ENCODE measurements at regions of chr14 and their contacts with region 1.

Region 1: GRCh38 chr14:96424109-96424989 is 32.4 kb downstream of the AK7 start:
- DNase-seq: peak in 1 of 2 experiments; percentile 70
- H3K4me3 ChIP-seq: peak overlapping the region; percentile 38
- H3K4me3 Mint-ChIP-seq: peak overlapping the region; percentile 69
- H3K27ac Mint-ChIP-seq: no peak overlapping the region
- H3K4me1 ChIP-seq: no peaks in the 10 kb centered on the region
- H3K4me1 Mint-ChIP-seq: no peaks in the 10 kb centered on the region
- H3K27me3 ChIP-seq: no peaks in the 10 kb centered on the region
- H3K27me3 Mint-ChIP-seq: no peaks in the 10 kb centered on the region
- CTCF ChIP-seq: peak; percentile 54 to 62

Region 2: GRCh38 chr14:96275177-96276112 is 148.9 kb before region 1 on chr14:
- CTCF ChIA-PET with region 1: no interaction called
- POLR2A ChIA-PET with region 1: no interaction called
- intact Hi-C with region 1: loop called (anchors 1 kb)
- DNase-seq: peak; percentile 64 to 83
- H3K4me3 ChIP-seq: no peak overlapping the region
- H3K4me3 Mint-ChIP-seq: peak overlapping the region; percentile 11
- H3K27ac Mint-ChIP-seq: no peak overlapping the region
- H3K4me1 ChIP-seq: peaks cover 12% of the 10 kb centered on the region
- H3K4me1 Mint-ChIP-seq: peaks cover 12% of the 10 kb centered on the region
- H3K27me3 ChIP-seq: no peaks in the 10 kb centered on the region
- H3K27me3 Mint-ChIP-seq: no peaks in the 10 kb centered on the region
- CTCF ChIP-seq: peak; percentile 91 to 96

Region 3: GRCh38 chr14:96281486-96281885 is 142.9 kb before region 1 on chr14:
- CTCF ChIA-PET with region 1: no interaction called
- POLR2A ChIA-PET with region 1: no interaction called
- intact Hi-C with region 1: loop called (anchors 1 kb)
- DNase-seq: no peak
- H3K4me3 ChIP-seq: no peak overlapping the region
- H3K4me3 Mint-ChIP-seq: no peak overlapping the region
- H3K27ac Mint-ChIP-seq: no peak overlapping the region
- H3K4me1 ChIP-seq: peaks cover 12% of the 10 kb centered on the region
- H3K4me1 Mint-ChIP-seq: peaks cover 12% of the 10 kb centered on the region
- H3K27me3 ChIP-seq: no peaks in the 10 kb centered on the region
- H3K27me3 Mint-ChIP-seq: no peaks in the 10 kb centered on the region
- CTCF ChIP-seq: no peak

Region 4: GRCh38 chr14:96297000-96297399 is 127.3 kb before region 1 on chr14:
- CTCF ChIA-PET with region 1: no interaction called
- POLR2A ChIA-PET with region 1: no interaction called
- intact Hi-C with region 1: loop called (anchors 1 kb)
- DNase-seq: no peak
- H3K4me3 ChIP-seq: no peak overlapping the region
- H3K4me3 Mint-ChIP-seq: no peak overlapping the region
- H3K27ac Mint-ChIP-seq: no peak overlapping the region
- H3K4me1 ChIP-seq: no peaks in the 10 kb centered on the region
- H3K4me1 Mint-ChIP-seq: peaks cover 6% of the 10 kb centered on the region
- H3K27me3 ChIP-seq: no peaks in the 10 kb centered on the region
- H3K27me3 Mint-ChIP-seq: no peaks in the 10 kb centered on the region
- CTCF ChIP-seq: peak; percentile 15 to 44

Region 5: DNA sequence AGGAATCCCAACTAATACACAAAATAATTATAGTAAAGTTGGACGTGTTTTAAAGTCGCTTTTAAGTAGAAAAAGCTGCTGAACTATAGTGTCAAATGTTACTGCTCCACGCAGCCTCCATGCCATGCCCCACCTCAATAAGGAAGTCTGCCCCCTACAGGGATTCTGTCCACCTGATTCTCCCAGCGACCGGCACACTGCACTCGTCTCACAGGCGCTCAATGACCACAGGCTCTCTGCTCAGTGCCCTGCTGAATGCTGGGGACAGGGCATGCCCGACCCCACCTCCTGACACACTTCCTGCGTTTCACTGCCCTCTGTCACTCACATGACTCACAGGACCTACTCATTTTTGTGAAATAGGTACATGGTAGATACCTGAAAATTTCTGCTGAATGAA is 119.4 kb before region 1 on chr14:
- CTCF ChIA-PET with region 1: no interaction called
- POLR2A ChIA-PET with region 1: no interaction called
- intact Hi-C with region 1: loop called (anchors 1 kb)
- DNase-seq: no peak
- H3K4me3 ChIP-seq: no peak overlapping the region
- H3K4me3 Mint-ChIP-seq: no peak overlapping the region
- H3K27ac Mint-ChIP-seq: no peak overlapping the region
- H3K4me1 ChIP-seq: peaks cover 20% of the 10 kb centered on the region
- H3K4me1 Mint-ChIP-seq: peaks cover 14% of the 10 kb centered on the region
- H3K27me3 ChIP-seq: no peaks in the 10 kb centered on the region
- H3K27me3 Mint-ChIP-seq: no peaks in the 10 kb centered on the region
- CTCF ChIP-seq: no peak

Region 6: GRCh38 chr14:96409701-96410100 is 14.6 kb before region 1 on chr14:
- CTCF ChIA-PET with region 1: no interaction called
- POLR2A ChIA-PET with region 1: no interaction called
- intact Hi-C with region 1: no loop called
- DNase-seq: no peak
- H3K4me3 ChIP-seq: no peak overlapping the region
- H3K4me3 Mint-ChIP-seq: no peak overlapping the region
- H3K27ac Mint-ChIP-seq: no peak overlapping the region
- H3K4me1 ChIP-seq: no peaks in the 10 kb centered on the region
- H3K4me1 Mint-ChIP-seq: no peaks in the 10 kb centered on the region
- H3K27me3 ChIP-seq: no peaks in the 10 kb centered on the region
- H3K27me3 Mint-ChIP-seq: no peaks in the 10 kb centered on the region
- CTCF ChIP-seq: no peak